ENCODE measurements at regions of chr1 and their contacts with region 1.

Region 1: GRCh38 chr1:37514350-37515184 is at the start of gene MEAF6:
- DNase-seq: peak; percentile 12 to 91
- H3K4me3 ChIP-seq: peak within 1 kb of the TSS; percentile 92 to 99
- H3K27ac ChIP-seq: peak within 1 kb of the TSS; percentile 92 to 99
- H3K4me1 ChIP-seq: peaks cover 8 to 24% of the 10 kb centered on the region in 2 donors
- H3K27me3 ChIP-seq: no peaks in the 10 kb centered on the region
- CTCF ChIP-seq: peak; percentile 20 to 84 (median 48)
- total RNA-seq, gene MEAF6: 12.3 TPM

Region 2: GRCh38 chr1:37533317-37534093 is 18.9 kb after region 1 on chr1:
- intact Hi-C with region 1: loop called (anchors 1 kb)
- DNase-seq: no peak
- H3K4me3 ChIP-seq: no peak overlapping the region
- H3K27ac ChIP-seq: peak overlapping the region; percentile 62 to 75
- H3K4me1 ChIP-seq: peaks cover 0 to 12% of the 10 kb centered on the region in 2 donors
- H3K27me3 ChIP-seq: no peaks in the 10 kb centered on the region
- CTCF ChIP-seq: no peak

Region 3: GRCh38 chr1:37553927-37554808 is 39.6 kb after region 1 on chr1 and contains the start of gene SNIP1:
- intact Hi-C with region 1: loop called (anchors 2 kb)
- DNase-seq: peak; percentile 68 to 96
- H3K4me3 ChIP-seq: peak within 1 kb of the TSS; percentile 90 to 94
- H3K27ac ChIP-seq: peak within 1 kb of the TSS; percentile 87 to 90
- H3K4me1 ChIP-seq: peaks cover 12 to 24% of the 10 kb centered on the region in 2 donors
- H3K27me3 ChIP-seq: no peaks in the 10 kb centered on the region
- CTCF ChIP-seq: no peak
- total RNA-seq, gene SNIP1: 14.4 TPM

Measured in ascending aorta (tissue), 2 donors.